Aorta (tissue), 5 donors: ENCODE measurements at regions of chr4 and their contacts with region 1.

Region 1: DNA sequence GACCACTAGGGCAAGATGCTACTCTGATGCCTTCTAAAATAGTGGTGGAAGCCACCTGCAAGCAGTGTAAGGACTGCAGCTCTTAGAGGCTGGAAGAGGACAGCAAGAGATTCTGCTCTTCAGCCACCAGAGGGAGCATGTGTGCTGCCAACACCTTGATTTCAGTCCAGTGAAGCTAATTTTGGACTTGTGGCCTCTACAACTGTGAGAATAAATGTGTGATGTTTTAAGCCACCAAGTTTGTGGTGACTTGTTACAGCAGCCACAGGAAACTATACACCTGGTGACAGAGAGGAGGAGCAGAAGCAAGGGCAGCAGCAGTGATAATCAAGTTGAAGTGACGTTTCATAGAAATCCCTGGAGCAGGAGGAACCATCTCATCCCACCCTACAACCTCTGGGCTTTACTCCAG is 55.9 kb downstream of the FGFBP1 start:
- DNase-seq: peak in 1 of 2 donors; percentile 53
- ATAC-seq: peak; percentile 88
- H3K4me3 ChIP-seq: no peak overlapping the region
- H3K27ac ChIP-seq: no peak overlapping the region
- H3K4me1 ChIP-seq: no peaks in the 10 kb centered on the region
- H3K27me3 ChIP-seq: no peaks in the 10 kb centered on the region

Region 2: DNA sequence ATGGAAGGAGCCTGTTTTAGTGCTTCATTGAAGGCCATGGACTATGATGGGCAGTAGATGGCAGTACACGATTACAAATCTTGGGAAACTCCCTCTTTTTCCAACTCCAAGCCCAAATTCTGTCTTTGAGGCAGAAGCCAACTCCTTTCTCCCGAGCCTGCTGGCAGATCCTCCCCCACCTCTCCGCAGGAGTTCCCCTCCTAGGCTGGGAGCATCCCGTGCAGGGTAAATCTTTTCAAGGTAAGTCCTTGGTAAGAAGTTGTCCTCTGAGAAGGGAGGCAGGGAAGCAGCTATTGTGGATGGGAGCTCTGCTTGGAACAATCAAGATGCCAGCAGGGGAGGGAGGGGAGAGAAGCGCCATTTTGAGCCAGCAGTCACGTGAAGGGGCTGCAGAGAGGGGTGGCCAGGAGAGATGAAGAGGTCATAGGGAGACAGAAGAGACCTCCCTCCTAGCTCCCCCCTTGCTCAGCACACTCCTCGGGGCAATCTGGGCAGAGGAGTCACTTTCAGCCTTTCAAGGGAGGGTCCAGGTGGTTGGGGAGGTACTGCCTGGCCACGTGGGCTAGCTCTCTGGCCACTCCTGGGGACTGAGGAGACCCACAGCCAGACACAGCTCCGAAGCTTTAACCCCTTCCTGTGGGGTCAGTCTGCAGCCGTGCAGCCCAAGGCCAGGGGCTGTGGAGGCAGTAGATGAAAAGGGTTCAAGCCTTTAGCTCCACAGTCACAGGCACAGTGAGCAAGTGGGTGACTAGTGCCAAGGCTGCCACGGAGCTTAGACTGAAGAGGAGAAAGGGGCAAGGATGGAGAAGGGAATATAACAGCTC is 403.4 kb before region 1 on chr4:
- intact Hi-C with region 1: loop called in 1 of 2 experiments (anchors 10 kb)
- DNase-seq: peak in 1 of 2 donors; percentile 64
- ATAC-seq: peak; percentile 89
- H3K4me3 ChIP-seq: peak overlapping the region; percentile 12 to 73
- H3K27ac ChIP-seq: peak overlapping the region in 1 of 2 donors; percentile 20
- H3K4me1 ChIP-seq: no peaks in the 10 kb centered on the region
- H3K27me3 ChIP-seq: no peaks in the 10 kb centered on the region

Region 3: GRCh38 chr4:15805583-15806517 is 76.8 kb before region 1 on chr4:
- intact Hi-C with region 1: loop called in 1 of 2 experiments (anchors 5 kb)
- DNase-seq: no peak
- ATAC-seq: peak; percentile 66
- H3K4me3 ChIP-seq: no peak overlapping the region
- H3K27ac ChIP-seq: no peak overlapping the region
- H3K4me1 ChIP-seq: no peaks in the 10 kb centered on the region
- H3K27me3 ChIP-seq: no peaks in the 10 kb centered on the region

Region 4: GRCh38 chr4:16001484-16001858 is 118.8 kb after region 1 on chr4:
- intact Hi-C with region 1: loop called in 1 of 2 experiments (anchors 5 kb)
- DNase-seq: peak in 1 of 2 donors; percentile 70
- ATAC-seq: peak; percentile 91
- H3K4me3 ChIP-seq: no peak overlapping the region
- H3K27ac ChIP-seq: no peak overlapping the region
- H3K4me1 ChIP-seq: no peaks in the 10 kb centered on the region
- H3K27me3 ChIP-seq: no peaks in the 10 kb centered on the region